ENCODE measurements at regions of chr10 and their contacts with region 1.

Region 1: GRCh38 chr10:52644373-52645186 is 128.0 kb downstream of the MBL2 start:
- DNase-seq: peak in 1 of 3 donors; percentile 68
- ATAC-seq: peak; percentile 69
- H3K4me3 ChIP-seq: no peak overlapping the region
- H3K4me1 ChIP-seq: no peaks in the 10 kb centered on the region
- CTCF ChIP-seq: peak; percentile 31

Region 2: GRCh38 chr10:52729271-52730104 is 84.9 kb after region 1 on chr10:
- intact Hi-C with region 1: loop called in 1 of 2 experiments (anchors 5 kb)
- DNase-seq: peak in 1 of 3 donors; percentile 6
- ATAC-seq: peak; percentile 38
- H3K4me3 ChIP-seq: no peak overlapping the region
- H3K4me1 ChIP-seq: no peaks in the 10 kb centered on the region
- CTCF ChIP-seq: no peak

Region 3: DNA sequence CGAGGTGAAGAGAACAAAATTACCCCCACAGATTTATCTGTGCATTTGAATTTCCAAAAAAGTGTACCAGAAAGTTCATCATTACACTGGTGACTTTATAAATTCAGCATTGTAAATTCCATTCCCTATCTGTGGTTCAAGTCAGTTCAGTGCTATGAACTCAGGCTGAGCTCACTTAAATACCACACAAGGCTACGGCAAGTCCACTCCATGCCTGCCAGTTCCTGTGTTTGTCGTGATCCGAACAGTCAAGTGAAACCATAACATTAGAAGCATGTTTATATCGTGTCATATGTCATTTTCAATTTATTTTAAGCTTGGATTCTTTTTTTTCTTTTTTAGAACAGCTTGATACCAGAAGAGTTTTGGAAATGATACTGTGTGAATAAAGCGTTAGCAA is 113.2 kb after region 1 on chr10:
- intact Hi-C with region 1: no loop called
- DNase-seq: no peak
- ATAC-seq: no peak
- H3K4me3 ChIP-seq: no peak overlapping the region
- H3K4me1 ChIP-seq: no peaks in the 10 kb centered on the region
- CTCF ChIP-seq: no peak

Region 4: DNA sequence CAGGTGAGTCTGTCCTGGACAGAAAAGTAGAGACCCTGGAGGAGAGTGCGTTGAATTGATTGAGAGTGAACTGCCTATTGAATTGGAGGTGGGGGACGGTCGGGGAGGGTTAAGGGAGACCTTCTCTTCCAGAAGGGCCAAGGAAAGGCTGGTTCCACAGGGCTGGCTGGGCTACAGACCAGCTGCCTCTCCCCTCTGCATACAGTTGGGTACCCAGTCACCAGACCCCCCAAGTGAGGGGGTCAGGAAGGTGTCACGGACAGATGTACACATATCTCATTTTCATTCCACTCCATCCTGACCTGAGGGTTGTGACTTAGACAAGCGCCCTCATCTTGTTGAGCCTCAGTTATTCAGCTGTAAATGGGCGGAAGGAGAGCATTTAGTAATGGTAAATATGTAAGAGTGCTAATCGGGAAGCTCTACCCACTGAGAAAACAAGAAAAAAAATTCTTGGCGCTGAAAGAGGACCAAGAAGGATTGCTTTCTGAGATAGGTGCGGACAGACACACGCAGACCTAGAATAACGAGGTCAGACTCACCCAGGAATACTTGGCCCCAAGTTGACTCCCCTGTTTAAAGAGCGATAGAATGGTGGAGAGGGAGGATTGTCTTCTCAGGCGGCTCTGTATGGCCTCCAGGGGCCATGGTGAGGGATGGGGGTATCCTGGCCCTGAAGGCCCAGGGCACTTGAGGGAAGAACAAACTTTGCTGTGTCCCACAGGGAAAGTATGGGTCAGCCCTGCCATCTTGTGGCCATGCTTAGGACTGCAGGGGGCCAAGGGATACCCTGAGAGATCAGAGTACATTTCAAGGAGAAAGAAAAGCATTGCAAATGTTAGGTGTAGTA is 135.2 kb after region 1 on chr10:
- intact Hi-C with region 1: loop called in 1 of 2 experiments (anchors 10 kb)
- DNase-seq: peak in 2 of 3 donors; percentile 72 to 75
- ATAC-seq: peak; percentile 75
- H3K4me3 ChIP-seq: no peak overlapping the region
- H3K4me1 ChIP-seq: no peaks in the 10 kb centered on the region
- CTCF ChIP-seq: peak; percentile 79

Measured in mucosa of descending colon (tissue), 3 donors.